PC-3 (cell line): ENCODE measurements at regions of chrX and their contacts with region 1.

Region 1: GRCh38 chrX:88613338-88613737 is 133.7 kb upstream of the CPXCR1 start:
- DNase-seq: peak; percentile 45
- ATAC-seq: peak; percentile 72
- H3K4me3 ChIP-seq: 0 out of 2 replicates have a peak overlapping the region, but pooled peaks have one; percentile 31
- H3K27ac ChIP-seq: no peak overlapping the region
- H3K4me1 ChIP-seq: no peaks in the 10 kb centered on the region
- H3K27me3 ChIP-seq: no peaks in the 10 kb centered on the region
- CTCF ChIP-seq: peak; percentile 72

Region 2: GRCh38 chrX:87697409-87697808 is 915.9 kb before region 1 on chrX:
- CTCF ChIA-PET with region 1: no interaction called
- POLR2A ChIA-PET with region 1: no interaction called
- intact Hi-C with region 1: loop called (anchors 1 kb)
- DNase-seq: peak; percentile 8
- ATAC-seq: 0 out of 2 replicates have a peak, but pooled peaks have one; percentile 13
- H3K4me3 ChIP-seq: no peak overlapping the region
- H3K27ac ChIP-seq: no peak overlapping the region
- H3K4me1 ChIP-seq: peaks cover 9% of the 10 kb centered on the region
- H3K27me3 ChIP-seq: no peaks in the 10 kb centered on the region
- CTCF ChIP-seq: 0 out of 2 replicates have a peak, but pooled peaks have one; percentile 8

Region 3: DNA sequence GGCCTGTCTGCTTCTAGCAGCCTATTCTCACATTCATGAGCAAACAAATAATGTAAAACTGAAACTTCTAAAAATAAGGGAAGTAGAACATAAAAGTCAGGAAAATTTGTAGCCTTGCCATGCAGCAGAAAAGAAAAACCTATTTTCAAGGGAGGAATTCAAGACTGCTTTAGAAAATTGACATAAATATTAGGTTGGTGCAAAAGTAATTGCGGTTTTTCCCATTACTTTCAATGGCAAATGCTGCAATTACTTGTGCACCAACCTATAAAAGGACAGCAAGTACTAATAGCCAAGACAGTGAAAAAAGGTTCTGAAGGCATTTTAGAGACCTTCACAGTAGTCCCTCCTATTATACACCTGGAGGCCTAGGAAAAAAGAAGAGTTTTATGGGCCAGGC is 638.0 kb before region 1 on chrX:
- CTCF ChIA-PET with region 1: no interaction called
- POLR2A ChIA-PET with region 1: no interaction called
- intact Hi-C with region 1: loop called (anchors 1 kb)
- DNase-seq: no peak
- ATAC-seq: no peak
- H3K4me3 ChIP-seq: no peak overlapping the region
- H3K27ac ChIP-seq: no peak overlapping the region
- H3K4me1 ChIP-seq: no peaks in the 10 kb centered on the region
- H3K27me3 ChIP-seq: no peaks in the 10 kb centered on the region
- CTCF ChIP-seq: no peak

Region 4: GRCh38 chrX:88135735-88136134 is 477.6 kb before region 1 on chrX:
- CTCF ChIA-PET with region 1: no interaction called
- POLR2A ChIA-PET with region 1: no interaction called
- intact Hi-C with region 1: loop called (anchors 1 kb)
- DNase-seq: peak; percentile 35
- ATAC-seq: no peak
- H3K4me3 ChIP-seq: no peak overlapping the region
- H3K27ac ChIP-seq: no peak overlapping the region
- H3K4me1 ChIP-seq: no peaks in the 10 kb centered on the region
- H3K27me3 ChIP-seq: no peaks in the 10 kb centered on the region
- CTCF ChIP-seq: peak; percentile 62